Mammary epithelial cell (primary cell): ENCODE measurements at regions of chr19 and their contacts with region 1.

Region 1: DNA sequence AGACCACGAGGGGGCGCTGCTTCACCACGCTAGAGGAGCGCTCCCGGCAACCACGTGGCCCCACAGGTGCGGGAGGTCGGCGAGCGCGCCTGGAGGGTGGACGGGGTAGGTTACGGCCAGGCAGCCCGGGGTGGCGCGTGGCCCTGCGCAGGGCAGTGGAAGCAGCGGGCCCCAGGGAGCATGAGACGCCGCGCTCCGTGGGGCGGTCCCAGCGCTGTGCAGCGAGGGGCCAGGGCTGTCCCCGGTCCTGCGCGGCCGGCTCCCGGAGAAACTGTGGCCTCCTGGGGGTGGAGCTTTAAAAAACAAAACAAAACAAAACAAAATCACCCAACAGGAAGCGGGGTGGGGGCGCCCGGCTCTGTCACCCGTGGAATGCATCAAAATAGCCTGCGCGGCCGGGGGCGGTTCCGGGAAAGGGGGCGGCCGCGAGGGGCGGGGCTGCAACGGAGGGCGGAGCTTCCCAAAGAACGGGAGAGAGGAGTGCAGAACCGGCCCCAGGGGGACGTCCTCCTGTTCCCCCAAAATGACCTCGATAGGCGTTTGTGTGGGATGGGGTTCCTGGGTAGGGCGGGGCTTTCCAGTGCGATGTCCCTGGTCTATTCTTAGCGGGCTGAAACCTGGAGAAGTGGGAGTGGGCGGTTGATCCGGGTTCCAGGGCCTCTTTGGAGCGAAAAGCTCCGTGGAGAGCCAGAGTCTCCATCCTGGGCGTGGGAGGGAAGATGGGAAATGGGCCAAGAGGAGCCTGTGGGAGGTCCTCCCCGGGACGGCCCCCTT is 27.3 kb downstream of the NUMBL start:
- DNase-seq: peak; percentile 70
- H3K4me3 ChIP-seq: peak overlapping the region; percentile 74 to 85 (median 77)
- H3K27ac ChIP-seq: peak overlapping the region; percentile 31
- H3K4me1 ChIP-seq: peaks cover 22% of the 10 kb centered on the region
- H3K27me3 ChIP-seq: no peaks in the 10 kb centered on the region
- CTCF ChIP-seq: peak; percentile 73 to 94

Region 2: GRCh38 chr19:40682431-40682964 is 19.4 kb after region 1 on chr19:
- CTCF ChIA-PET with region 1: no interaction called
- dilution Hi-C with region 1: no loop called
- in situ Hi-C with region 1: no loop called
- intact Hi-C with region 1: no loop called
- DNase-seq: no peak
- H3K4me3 ChIP-seq: no peak overlapping the region
- H3K27ac ChIP-seq: no peak overlapping the region
- H3K4me1 ChIP-seq: no peaks in the 10 kb centered on the region
- H3K27me3 ChIP-seq: no peaks in the 10 kb centered on the region
- CTCF ChIP-seq: no peak

Region 3: DNA sequence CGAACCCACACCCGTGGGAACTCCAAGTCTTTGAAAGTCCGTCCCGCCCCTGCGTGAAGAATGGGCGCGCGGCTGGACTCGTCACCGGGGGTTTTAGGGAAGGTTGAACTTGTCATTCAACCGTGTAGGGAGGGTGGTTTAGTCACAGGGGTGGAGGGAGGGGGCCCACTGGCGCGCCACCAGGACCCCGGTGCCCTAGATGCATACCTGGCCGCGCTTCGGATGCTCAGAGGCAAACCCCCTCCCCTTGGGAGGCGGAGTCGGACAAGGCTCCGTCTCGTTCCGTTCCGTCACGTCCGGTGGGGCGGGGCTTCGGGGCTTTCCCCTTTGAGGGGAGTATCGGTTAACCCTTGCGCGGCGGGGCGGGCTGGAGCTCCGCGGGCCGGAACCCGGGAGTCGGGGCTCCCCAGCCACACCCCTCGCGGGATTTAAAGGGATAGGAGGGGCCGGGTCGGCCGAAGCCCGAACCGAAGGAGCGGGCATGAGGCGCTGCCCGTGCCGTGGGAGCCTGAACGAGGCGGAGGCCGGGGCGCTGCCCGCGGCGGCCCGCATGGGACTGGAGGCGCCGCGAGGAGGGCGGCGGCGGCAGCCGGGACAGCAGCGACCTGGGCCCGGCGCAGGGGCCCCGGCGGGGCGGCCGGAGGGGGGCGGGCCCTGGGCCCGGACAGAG is 53.7 kb after region 1 on chr19 and contains the starts of genes COQ8B and ITPKC:
- CTCF ChIA-PET with region 1: no interaction called
- dilution Hi-C with region 1: no loop called
- in situ Hi-C with region 1: no loop called
- intact Hi-C with region 1: loop called (anchors 1 kb)
- DNase-seq: peak; percentile 99
- H3K4me3 ChIP-seq: peak within 1 kb of the TSS; percentile 56 to 90 (median 89)
- H3K27ac ChIP-seq: peak within 1 kb of the TSS; percentile 100
- H3K4me1 ChIP-seq: peaks cover 31% of the 10 kb centered on the region
- H3K27me3 ChIP-seq: no peaks in the 10 kb centered on the region
- CTCF ChIP-seq: no peak
- total RNA-seq, gene COQ8B: 23.8 to 32.0 TPM
- total RNA-seq, gene ITPKC: 38.7 to 40.0 TPM

Region 4: DNA sequence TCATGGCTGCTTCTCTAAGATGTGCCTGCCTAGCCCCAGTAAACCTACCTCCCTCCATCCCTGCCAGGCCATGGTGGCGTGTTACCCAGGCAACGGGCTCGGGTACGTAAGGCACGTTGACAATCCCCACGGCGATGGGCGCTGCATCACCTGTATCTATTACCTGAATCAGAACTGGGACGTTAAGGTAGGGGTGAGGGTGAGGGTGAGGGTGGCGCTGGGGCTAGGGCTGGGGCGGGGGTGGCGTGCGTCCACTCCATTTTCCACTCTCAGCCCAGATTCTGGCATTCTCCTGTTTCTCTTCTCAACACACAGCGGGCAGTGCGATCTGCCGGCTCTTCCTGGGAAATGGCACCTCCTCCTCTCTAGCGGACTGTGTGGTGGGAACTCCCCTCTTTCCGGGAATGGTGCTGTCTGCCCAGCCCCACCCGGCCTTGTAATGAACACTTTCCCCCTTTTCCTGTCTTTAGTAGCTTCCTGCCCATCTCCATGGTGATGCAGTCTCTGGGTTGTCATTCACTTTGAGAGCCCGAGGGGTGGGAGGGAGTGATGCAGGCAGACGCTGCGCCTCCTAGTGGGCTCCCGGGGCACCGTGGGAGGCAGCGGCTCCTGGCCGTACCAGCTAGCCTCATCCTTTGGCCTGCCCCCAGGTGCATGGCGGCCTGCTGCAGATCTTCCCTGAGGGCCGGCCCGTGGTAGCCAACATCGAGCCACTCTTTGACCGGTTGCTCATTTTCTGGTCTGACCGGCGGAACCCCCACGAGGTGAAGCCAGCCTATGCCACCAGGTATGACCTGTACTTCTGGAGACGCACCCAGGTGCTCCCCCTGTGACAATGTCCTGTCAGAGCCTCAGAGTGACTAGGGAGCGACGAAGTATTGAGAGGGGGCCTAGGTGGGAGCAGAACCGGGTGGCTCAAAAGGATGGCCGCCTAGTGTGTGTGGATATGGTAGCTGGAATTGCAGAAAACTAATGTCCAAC is 143.7 kb after region 1 on chr19:
- CTCF ChIA-PET with region 1: interaction called, 4 read pairs
- dilution Hi-C with region 1: no loop called
- in situ Hi-C with region 1: loop called (anchors 5 to 10 kb)
- intact Hi-C with region 1: loop called (anchors 2 kb)
- DNase-seq: peak; percentile 63
- H3K4me3 ChIP-seq: no peak overlapping the region
- H3K27ac ChIP-seq: peak overlapping the region; percentile 23
- H3K4me1 ChIP-seq: peaks cover 48% of the 10 kb centered on the region
- H3K27me3 ChIP-seq: no peaks in the 10 kb centered on the region
- CTCF ChIP-seq: peak; percentile 79 to 83

Region 5: GRCh38 chr19:40974633-40975037 is 311.5 kb after region 1 on chr19:
- CTCF ChIA-PET with region 1: no interaction called
- dilution Hi-C with region 1: no loop called
- in situ Hi-C with region 1: no loop called
- intact Hi-C with region 1: loop called (anchors 5 kb)
- DNase-seq: peak; percentile 35
- H3K4me3 ChIP-seq: no peak overlapping the region
- H3K27ac ChIP-seq: no peak overlapping the region
- H3K4me1 ChIP-seq: no peaks in the 10 kb centered on the region
- H3K27me3 ChIP-seq: no peaks in the 10 kb centered on the region
- CTCF ChIP-seq: peak; percentile 84 to 89

Region 6: DNA sequence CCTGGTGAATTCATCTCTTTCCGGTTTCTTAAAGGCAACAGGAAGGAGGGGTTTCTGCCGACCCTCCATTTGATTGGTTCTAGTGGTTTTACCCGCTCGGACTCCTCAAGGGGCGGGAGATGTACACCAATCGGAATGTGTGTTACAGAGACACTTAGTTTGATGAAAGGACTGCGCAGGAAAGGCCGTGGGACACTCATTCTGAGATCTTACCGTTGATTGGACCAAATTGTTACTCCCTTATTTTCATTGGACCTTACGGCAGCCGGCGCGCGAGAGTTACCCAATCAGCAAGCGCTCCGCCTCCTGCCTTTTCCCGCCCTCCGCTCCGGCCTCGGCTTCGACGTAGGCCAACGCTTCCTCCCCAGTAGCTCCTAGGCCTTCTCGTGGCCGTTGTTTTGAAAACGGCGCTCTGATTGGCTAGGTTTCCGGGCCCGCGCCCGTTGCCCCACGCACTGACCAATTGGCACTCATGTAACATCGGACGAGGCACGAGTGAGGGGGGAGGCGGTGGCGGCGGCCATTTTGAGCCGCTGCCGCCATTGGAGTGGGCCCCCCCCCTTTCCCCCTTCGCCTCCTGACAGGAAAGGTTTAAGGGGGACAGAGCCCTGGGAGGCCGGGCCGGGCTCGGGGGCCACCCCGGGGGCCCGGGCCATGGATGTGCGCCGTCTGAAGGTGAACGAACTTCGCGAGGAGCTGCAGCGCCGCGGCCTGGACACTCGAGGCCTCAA is 600.9 kb after region 1 on chr19 and contains the start of gene HNRNPUL1:
- CTCF ChIA-PET with region 1: no interaction called
- dilution Hi-C with region 1: no loop called
- in situ Hi-C with region 1: no loop called
- intact Hi-C with region 1: loop called (anchors 5 kb)
- DNase-seq: peak; percentile 100
- H3K4me3 ChIP-seq: peak within 1 kb of the TSS; percentile 85 to 93 (median 87)
- H3K27ac ChIP-seq: peak within 1 kb of the TSS; percentile 92
- H3K4me1 ChIP-seq: peaks cover 20% of the 10 kb centered on the region
- H3K27me3 ChIP-seq: no peaks in the 10 kb centered on the region
- CTCF ChIP-seq: peak in 1 of 2 donors; percentile 51
- total RNA-seq, gene HNRNPUL1: 80.7 to 175 TPM